Activated T-helper 1 cell treated with anti-CD3 and anti-CD28 coated beads, Interleukin-12 subunit alpha, Interleukin-12 subunit beta, Interleukin-2, Interleukin-4 antibody, amounts not matched to agents 30 ng/mL and 10 ng/mL and 1 ng/mL, durations not matched to agents 14 hours and 24 hours and 36 hours (primary cell): ENCODE measurements at regions of chr1 and their contacts with region 1.

Region 1: GRCh38 chr1:47432071-47433036 is 5.5 kb upstream of the FOXD2 start:
- DNase-seq: peak; percentile 28
- H3K4me3 Mint-ChIP-seq: no peak overlapping the region
- H3K27ac Mint-ChIP-seq: no peak overlapping the region
- H3K4me1 Mint-ChIP-seq: peaks cover 34% of the 10 kb centered on the region
- H3K27me3 Mint-ChIP-seq: peaks cover 36% of the 10 kb centered on the region

Region 2: DNA sequence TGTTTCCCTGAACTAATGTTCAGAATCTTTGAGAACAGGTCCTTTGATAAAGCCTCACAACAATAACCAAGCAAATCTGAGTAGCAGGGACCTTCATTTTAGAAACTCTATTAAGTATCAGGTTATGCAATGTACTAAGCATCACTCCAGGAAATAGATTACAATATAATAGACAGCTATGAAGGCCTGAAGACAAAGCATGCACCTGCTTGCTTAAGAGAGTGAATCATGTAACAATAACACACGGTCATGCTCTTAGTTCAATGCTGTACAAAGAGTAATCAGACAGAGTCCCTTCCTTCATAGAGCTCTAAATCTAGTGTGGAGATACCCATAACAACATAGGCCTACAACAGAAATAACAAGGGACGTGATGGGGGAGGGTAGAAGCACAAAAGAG is 106.8 kb before region 1 on chr1:
- intact Hi-C with region 1: no loop called
- DNase-seq: no peak
- H3K4me3 Mint-ChIP-seq: no peak overlapping the region
- H3K27ac Mint-ChIP-seq: no peak overlapping the region
- H3K4me1 Mint-ChIP-seq: no peaks in the 10 kb centered on the region
- H3K27me3 Mint-ChIP-seq: no peaks in the 10 kb centered on the region

Region 3: GRCh38 chr1:47417170-47418044 is 14.9 kb before region 1 on chr1:
- intact Hi-C with region 1: loop called (anchors 2 kb)
- DNase-seq: no peak
- H3K4me3 Mint-ChIP-seq: no peak overlapping the region
- H3K27ac Mint-ChIP-seq: peak overlapping the region; percentile 32
- H3K4me1 Mint-ChIP-seq: no peaks in the 10 kb centered on the region
- H3K27me3 Mint-ChIP-seq: peaks cover 65% of the 10 kb centered on the region